ENCODE measurements at regions of chr17 and their contacts with region 1.

Region 1: GRCh38 chr17:27879987-27880608 is 13.1 kb downstream of the LYRM9 start:
- DNase-seq: peak; percentile 42 to 55 (median 47)
- H3K4me3 ChIP-seq: no peak overlapping the region
- H3K4me3 Mint-ChIP-seq: no peak overlapping the region
- H3K27ac ChIP-seq: no peak overlapping the region
- H3K27ac Mint-ChIP-seq: no peak overlapping the region
- H3K4me1 ChIP-seq: no peaks in the 10 kb centered on the region
- H3K4me1 Mint-ChIP-seq: peaks cover 8% of the 10 kb centered on the region
- H3K27me3 ChIP-seq: no peaks in the 10 kb centered on the region
- H3K27me3 Mint-ChIP-seq: no peaks in the 10 kb centered on the region
- CTCF ChIP-seq: peak; percentile 85

Region 2: DNA sequence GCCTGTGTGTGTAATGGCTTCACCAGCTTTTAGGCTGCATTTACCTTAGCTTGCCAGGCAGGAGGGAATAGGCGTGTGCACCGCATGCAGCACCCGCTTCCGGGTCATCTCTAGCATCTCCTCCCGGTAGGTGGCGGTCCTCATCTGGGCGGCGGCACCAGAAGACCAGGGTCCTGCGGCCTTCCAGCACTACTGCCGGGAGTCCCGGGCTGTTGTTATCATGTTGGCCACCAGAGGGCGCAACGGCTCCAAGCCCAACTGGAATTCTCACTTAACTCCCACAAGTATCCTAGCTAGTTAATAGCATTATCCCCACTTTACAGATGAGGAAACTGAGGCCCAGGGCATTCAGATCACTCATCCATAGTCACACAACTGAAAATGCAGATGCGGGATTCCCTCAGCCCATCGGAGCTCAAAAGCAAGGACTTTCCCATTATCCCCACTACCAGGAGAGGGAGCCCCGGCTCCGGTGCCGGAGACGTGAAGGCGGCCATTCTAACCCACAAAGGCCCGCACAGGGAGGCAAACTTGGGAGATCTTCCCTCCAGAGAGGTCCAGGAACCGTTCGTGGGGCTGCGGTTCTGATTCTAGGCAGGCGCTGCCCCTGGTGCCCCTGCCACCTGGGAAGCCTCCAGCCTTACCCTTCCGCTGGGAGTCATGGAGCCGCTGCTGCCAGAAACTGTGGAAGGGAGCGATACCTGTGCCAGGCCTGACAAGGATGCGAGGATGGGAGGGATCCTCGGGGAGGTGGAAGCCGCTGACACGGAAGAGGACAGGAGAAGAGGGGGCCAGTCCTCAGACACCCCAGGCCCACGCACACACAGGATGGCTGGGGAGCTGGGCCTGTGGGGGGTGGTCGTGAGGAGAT is 225.2 kb before region 1 on chr17:
- intact Hi-C with region 1: loop called (anchors 10 kb)
- DNase-seq: peak; percentile 51 to 72 (median 59)
- H3K4me3 ChIP-seq: no peak overlapping the region
- H3K4me3 Mint-ChIP-seq: no peak overlapping the region
- H3K27ac ChIP-seq: no peak overlapping the region
- H3K27ac Mint-ChIP-seq: peak overlapping the region in 1 of 7 donors; percentile 2
- H3K4me1 ChIP-seq: no peaks in the 10 kb centered on the region
- H3K4me1 Mint-ChIP-seq: no peaks in the 10 kb centered on the region
- H3K27me3 ChIP-seq: no peaks in the 10 kb centered on the region
- H3K27me3 Mint-ChIP-seq: peaks cover 1 to 5% (median 2%) of the 10 kb centered on the region in 3 donors
- CTCF ChIP-seq: peak; percentile 96

Region 3: DNA sequence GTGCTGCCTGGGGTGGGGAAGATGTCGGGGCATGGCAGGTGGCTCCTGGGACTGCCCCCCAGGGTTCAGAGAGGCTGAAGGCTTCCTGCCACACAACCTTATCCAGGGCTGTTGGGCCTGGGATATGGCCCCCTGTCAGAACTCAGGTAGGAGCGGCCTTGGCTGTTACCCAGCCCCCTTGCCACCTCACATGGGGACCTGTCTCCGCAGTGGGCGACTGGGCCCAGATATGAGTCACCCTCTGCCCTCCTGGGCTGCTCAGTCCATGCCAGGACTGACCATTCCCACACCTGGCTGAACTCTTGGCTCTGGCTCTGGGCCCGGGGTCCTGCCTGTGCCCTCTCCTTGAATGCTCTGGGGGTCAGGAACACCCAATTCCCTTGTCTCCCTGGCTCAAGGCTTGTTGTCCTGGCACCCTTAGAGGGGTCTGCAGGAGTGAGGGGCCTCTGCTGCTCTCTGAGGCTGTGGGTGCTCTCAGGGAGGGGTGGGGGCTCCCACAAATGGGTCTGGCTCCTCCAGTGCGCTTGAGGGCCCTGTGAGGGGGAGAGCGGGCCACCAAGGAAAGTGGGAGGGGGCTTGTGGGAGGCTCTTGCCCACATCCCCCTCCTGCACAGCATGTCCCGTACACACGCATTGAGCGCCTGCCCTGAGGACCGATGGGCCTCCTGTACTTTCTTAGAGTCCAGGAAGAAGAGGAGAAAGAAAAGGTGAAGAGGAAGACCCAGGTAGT is 213.1 kb before region 1 on chr17:
- intact Hi-C with region 1: loop called in 1 of 2 experiments (anchors 10 kb)
- DNase-seq: no peak
- H3K4me3 ChIP-seq: no peak overlapping the region
- H3K4me3 Mint-ChIP-seq: no peak overlapping the region
- H3K27ac ChIP-seq: no peak overlapping the region
- H3K27ac Mint-ChIP-seq: peak overlapping the region in 1 of 7 donors; percentile 13
- H3K4me1 ChIP-seq: no peaks in the 10 kb centered on the region
- H3K4me1 Mint-ChIP-seq: no peaks in the 10 kb centered on the region
- H3K27me3 ChIP-seq: no peaks in the 10 kb centered on the region
- H3K27me3 Mint-ChIP-seq: peaks cover 0 to 4% (median 0%) of the 10 kb centered on the region in 3 donors
- CTCF ChIP-seq: no peak

Region 4: GRCh38 chr17:27760069-27760885 is 119.8 kb before region 1 on chr17:
- intact Hi-C with region 1: loop called (anchors 1 kb)
- DNase-seq: peak; percentile 32 to 53 (median 37)
- H3K4me3 ChIP-seq: no peak overlapping the region
- H3K4me3 Mint-ChIP-seq: no peak overlapping the region
- H3K27ac ChIP-seq: no peak overlapping the region
- H3K27ac Mint-ChIP-seq: no peak overlapping the region
- H3K4me1 ChIP-seq: no peaks in the 10 kb centered on the region
- H3K4me1 Mint-ChIP-seq: no peaks in the 10 kb centered on the region
- H3K27me3 ChIP-seq: no peaks in the 10 kb centered on the region
- H3K27me3 Mint-ChIP-seq: peaks cover 0 to 5% (median 3%) of the 10 kb centered on the region in 3 donors
- CTCF ChIP-seq: peak; percentile 97

Region 5: GRCh38 chr17:27805520-27806146 is 74.5 kb before region 1 on chr17:
- intact Hi-C with region 1: loop called (anchors 5 to 10 kb)
- DNase-seq: peak; percentile 70 to 82 (median 78)
- H3K4me3 ChIP-seq: peak overlapping the region; percentile 33 to 80 (median 58)
- H3K4me3 Mint-ChIP-seq: peak overlapping the region; percentile 88 to 98
- H3K27ac ChIP-seq: peak overlapping the region in 1 of 2 donors; percentile 82
- H3K27ac Mint-ChIP-seq: peak overlapping the region; percentile 72 to 91 (median 81)
- H3K4me1 ChIP-seq: peaks cover 13 to 20% of the 10 kb centered on the region in 2 donors
- H3K4me1 Mint-ChIP-seq: peaks cover 29% of the 10 kb centered on the region
- H3K27me3 ChIP-seq: no peaks in the 10 kb centered on the region
- H3K27me3 Mint-ChIP-seq: peaks cover 0 to 2% (median under 1%) of the 10 kb centered on the region in 3 donors
- CTCF ChIP-seq: peak; percentile 92

Region 6: DNA sequence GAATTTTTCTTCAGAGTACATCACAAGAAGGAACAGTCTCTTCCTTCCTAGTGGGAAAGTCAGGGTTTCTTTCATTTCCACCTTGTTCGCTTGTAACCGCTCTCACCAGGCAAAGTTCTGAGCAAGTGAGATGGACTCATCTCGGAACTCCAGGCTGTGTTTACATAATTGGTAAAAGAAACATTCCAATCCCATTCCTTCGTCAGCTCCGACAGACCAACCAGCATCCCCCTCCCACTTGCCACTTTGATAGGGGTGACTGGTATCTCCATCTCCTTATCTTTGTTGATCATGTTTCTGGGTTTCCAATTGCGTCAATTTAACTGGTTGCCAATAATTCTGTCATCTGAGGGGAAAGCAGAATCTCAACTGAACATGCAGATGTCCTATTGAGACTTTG is 49.9 kb after region 1 on chr17:
- intact Hi-C with region 1: no loop called
- DNase-seq: no peak
- H3K4me3 ChIP-seq: no peak overlapping the region
- H3K4me3 Mint-ChIP-seq: no peak overlapping the region
- H3K27ac ChIP-seq: no peak overlapping the region
- H3K27ac Mint-ChIP-seq: no peak overlapping the region
- H3K4me1 ChIP-seq: no peaks in the 10 kb centered on the region
- H3K4me1 Mint-ChIP-seq: no peaks in the 10 kb centered on the region
- H3K27me3 ChIP-seq: no peaks in the 10 kb centered on the region
- H3K27me3 Mint-ChIP-seq: peaks cover 2% of the 10 kb centered on the region in 3 donors
- CTCF ChIP-seq: no peak

Measured in CD14-positive monocyte (primary cell).